CD8-positive, alpha-beta memory T cell (primary cell): ENCODE measurements at regions of chr6 and their contacts with region 1.

Region 1: DNA sequence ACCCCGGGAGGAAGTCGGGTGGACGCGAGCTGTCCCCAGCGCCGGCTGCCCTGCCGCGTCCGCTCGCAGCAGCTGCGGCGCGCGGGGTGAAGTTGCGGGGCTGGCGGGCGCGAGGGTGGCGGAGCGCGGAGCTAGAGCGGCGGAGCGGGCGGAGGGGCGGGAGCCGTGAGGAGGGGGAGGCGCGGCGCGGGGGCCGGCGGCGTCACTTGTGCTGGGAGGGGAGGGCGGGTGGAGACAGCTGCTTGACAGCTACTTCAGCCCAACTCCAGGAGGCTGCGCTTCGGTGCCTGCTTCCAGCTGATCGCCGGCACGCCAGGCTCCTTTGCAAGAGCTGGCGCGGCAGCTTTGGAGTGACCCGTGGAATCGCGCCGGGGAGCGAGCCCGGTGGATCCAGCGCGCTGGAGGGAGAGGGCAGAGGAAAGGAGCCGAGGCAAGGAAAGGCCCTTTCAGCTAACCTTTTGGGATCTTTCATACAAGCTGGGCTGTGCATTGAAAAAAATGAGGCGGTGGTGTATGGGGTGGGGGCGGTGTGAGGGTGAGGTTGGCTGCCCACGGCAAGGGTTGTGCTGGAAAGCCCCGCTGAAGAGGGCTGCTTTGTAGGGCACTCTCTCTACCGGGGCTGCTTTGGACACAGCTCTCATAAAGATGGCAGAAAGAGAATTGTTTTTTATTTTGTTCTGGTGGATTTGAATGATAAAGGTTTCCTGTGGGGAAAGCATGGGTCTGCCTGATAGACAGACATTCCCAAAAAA is 24.6 kb downstream of the RIPOR2 start:
- DNase-seq: peak; percentile 20 to 63 (median 47)
- H3K4me3 ChIP-seq: peak overlapping the region; percentile 61
- H3K4me3 Mint-ChIP-seq: peak overlapping the region; percentile 89 to 98 (median 94)
- H3K27ac ChIP-seq: peak overlapping the region; percentile 51
- H3K27ac Mint-ChIP-seq: peak overlapping the region; percentile 90 to 99 (median 98)
- H3K4me1 ChIP-seq: peaks cover 95% of the 10 kb centered on the region
- H3K4me1 Mint-ChIP-seq: peaks cover 96 to 97% (median 97%) of the 10 kb centered on the region in 3 donors
- H3K27me3 ChIP-seq: no peaks in the 10 kb centered on the region
- H3K27me3 Mint-ChIP-seq: no peaks in the 10 kb centered on the region

Region 2: DNA sequence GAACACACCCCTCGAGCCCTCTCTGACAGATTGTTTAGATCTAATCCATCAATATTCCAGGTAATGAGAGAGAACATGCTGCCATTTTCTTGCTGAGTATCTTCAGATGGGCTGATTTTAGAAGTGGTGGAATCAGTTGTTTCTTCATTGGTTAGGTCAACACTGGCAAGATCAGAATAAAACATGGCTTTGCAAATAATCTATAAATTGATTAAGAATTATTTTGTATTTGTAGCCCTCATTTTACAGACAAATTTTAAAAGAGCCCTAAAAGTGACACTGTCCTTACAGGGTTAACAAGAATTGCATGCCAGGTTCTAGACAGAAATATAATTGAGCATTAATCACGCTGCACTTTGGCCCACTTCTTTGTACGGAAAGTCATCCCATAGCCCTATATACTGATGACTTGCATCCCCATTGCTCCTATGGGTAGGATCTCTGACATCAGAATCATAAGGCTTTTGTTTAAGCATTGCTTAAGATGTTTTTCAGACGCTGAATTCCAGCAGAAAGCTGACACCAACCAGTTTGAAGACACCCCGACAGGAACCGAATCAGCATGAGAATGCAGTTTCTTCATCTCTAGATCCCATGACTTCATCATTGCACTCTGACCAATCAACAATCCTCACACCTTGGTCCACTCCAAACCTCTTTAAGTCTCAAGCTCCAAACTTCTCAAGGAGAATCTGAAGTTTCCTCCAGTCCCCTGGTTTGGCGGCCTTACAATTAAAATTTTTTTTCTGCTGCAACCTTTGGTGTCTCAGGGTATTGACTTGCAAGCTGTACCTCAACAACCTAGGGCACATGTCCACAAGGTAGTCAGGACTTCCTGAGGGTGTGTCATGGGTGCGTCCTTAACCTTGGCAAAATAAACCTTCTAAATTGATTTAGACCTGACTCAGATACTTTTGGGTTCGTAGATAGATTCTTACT is 252.3 kb before region 1 on chr6:
- CTCF ChIA-PET with region 1: no interaction called
- POLR2A ChIA-PET with region 1: no interaction called
- DNase-seq: no peak
- H3K4me3 ChIP-seq: no peak overlapping the region
- H3K4me3 Mint-ChIP-seq: no peak overlapping the region
- H3K27ac ChIP-seq: peak overlapping the region; percentile 41
- H3K27ac Mint-ChIP-seq: peak overlapping the region in 5 of 8 donors; percentile 4 to 58 (median 49)
- H3K4me1 ChIP-seq: peaks cover 4% of the 10 kb centered on the region
- H3K4me1 Mint-ChIP-seq: peaks cover 46 to 79% (median 78%) of the 10 kb centered on the region in 3 donors
- H3K27me3 ChIP-seq: no peaks in the 10 kb centered on the region
- H3K27me3 Mint-ChIP-seq: no peaks in the 10 kb centered on the region

Region 3: GRCh38 chr6:24924580-24925356 is 13.6 kb after region 1 on chr6:
- CTCF ChIA-PET with region 1: interaction called, 49 read pairs
- POLR2A ChIA-PET with region 1: interaction called, 10 read pairs
- DNase-seq: no peak
- H3K4me3 ChIP-seq: peak overlapping the region; percentile 32
- H3K4me3 Mint-ChIP-seq: peak overlapping the region; percentile 75 to 86 (median 81)
- H3K27ac ChIP-seq: no peak overlapping the region
- H3K27ac Mint-ChIP-seq: peak overlapping the region; percentile 82 to 95 (median 92)
- H3K4me1 ChIP-seq: peaks cover 88% of the 10 kb centered on the region
- H3K4me1 Mint-ChIP-seq: peaks cover 77 to 97% (median 91%) of the 10 kb centered on the region in 3 donors
- H3K27me3 ChIP-seq: no peaks in the 10 kb centered on the region
- H3K27me3 Mint-ChIP-seq: no peaks in the 10 kb centered on the region

Region 4: GRCh38 chr6:25278914-25279747 is 368.0 kb after region 1 on chr6 and contains the start of gene CARMIL1:
- CTCF ChIA-PET with region 1: no interaction called
- POLR2A ChIA-PET with region 1: no interaction called
- DNase-seq: peak; percentile 35 to 77 (median 51)
- H3K4me3 ChIP-seq: peak within 1 kb of the TSS; percentile 54
- H3K4me3 Mint-ChIP-seq: peak within 1 kb of the TSS; percentile 88 to 96 (median 91)
- H3K27ac ChIP-seq: no peak within 1 kb of the TSS
- H3K27ac Mint-ChIP-seq: peak within 1 kb of the TSS in 7 of 8 donors; percentile 76 to 94 (median 80)
- H3K4me1 ChIP-seq: peaks cover 7% of the 10 kb centered on the region
- H3K4me1 Mint-ChIP-seq: peaks cover 20 to 35% (median 29%) of the 10 kb centered on the region in 3 donors
- H3K27me3 ChIP-seq: no peaks in the 10 kb centered on the region
- H3K27me3 Mint-ChIP-seq: peaks cover 12 to 15% of the 10 kb centered on the region in 2 donors
- total RNA-seq, gene CARMIL1: 1.8 to 2.9 TPM